ENCODE measurements at regions of chr9 and their contacts with region 1.

Region 1: DNA sequence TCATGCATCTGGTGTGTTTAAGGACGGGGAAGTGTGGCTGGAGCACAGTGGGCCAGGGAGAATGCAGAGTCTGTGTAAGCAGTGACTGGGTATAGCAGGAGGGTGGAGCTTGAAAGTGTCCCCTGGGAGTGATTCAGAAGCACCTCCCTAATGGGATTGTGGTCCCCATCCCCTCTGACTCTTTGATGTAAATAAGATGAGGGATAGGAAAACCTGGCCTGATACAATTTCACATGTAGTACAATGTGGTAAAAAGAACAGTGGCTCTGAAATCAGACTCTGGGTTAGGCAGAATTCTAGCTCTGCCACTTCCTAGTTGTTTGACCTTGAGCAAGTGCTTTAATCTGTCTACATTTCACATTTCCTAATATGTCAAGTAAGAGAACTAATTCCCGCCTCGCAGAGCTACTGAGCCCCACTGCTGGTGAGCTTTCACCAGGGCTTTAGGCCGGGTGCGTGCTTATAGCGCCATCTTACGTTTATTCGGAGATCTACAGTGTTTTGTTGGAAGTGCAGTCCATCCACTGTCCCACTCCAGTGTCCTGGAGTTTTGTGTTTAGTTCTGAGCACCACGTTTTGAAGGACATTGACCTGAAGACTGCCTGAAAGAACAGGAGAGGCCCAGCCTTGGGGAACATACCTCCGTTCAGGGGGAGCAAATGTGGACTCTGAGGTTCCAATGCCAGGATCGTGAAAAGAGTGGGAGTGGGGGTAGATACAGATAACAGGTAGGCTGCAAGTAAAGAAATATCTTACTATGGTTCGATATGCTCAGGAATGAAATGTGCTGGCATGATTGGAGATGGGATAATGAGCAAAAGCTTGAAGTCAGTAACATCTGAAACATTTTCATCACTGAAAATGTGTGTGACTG is 51.2 kb upstream of the TESK1 start:
- DNase-seq: peak; percentile 71
- H3K4me3 Mint-ChIP-seq: no peak overlapping the region
- H3K27ac Mint-ChIP-seq: no peak overlapping the region
- H3K4me1 Mint-ChIP-seq: no peaks in the 10 kb centered on the region
- H3K27me3 Mint-ChIP-seq: no peaks in the 10 kb centered on the region

Region 2: GRCh38 chr9:34989003-34989945 is 564.6 kb before region 1 on chr9 and contains the start of gene DNAJB5:
- CTCF ChIA-PET with region 1: no interaction called
- intact Hi-C with region 1: no loop called
- DNase-seq: peak; percentile 99
- H3K4me3 Mint-ChIP-seq: peak within 1 kb of the TSS; percentile 90
- H3K27ac Mint-ChIP-seq: peak within 1 kb of the TSS; percentile 92
- H3K4me1 Mint-ChIP-seq: peaks cover 85% of the 10 kb centered on the region
- H3K27me3 Mint-ChIP-seq: no peaks in the 10 kb centered on the region
- total RNA-seq, gene DNAJB5: 11.4 to 12.0 TPM

Region 3: GRCh38 chr9:35258676-35259474 is 295.0 kb before region 1 on chr9:
- CTCF ChIA-PET with region 1: interaction called, 3 read pairs
- intact Hi-C with region 1: loop called (anchors 1 kb)
- DNase-seq: peak; percentile 68
- H3K4me3 Mint-ChIP-seq: no peak overlapping the region
- H3K27ac Mint-ChIP-seq: no peak overlapping the region
- H3K4me1 Mint-ChIP-seq: no peaks in the 10 kb centered on the region
- H3K27me3 Mint-ChIP-seq: no peaks in the 10 kb centered on the region

Region 4: GRCh38 chr9:35636135-35636876 is 82.4 kb after region 1 on chr9:
- CTCF ChIA-PET with region 1: no interaction called
- intact Hi-C with region 1: no loop called
- DNase-seq: no peak
- H3K4me3 Mint-ChIP-seq: no peak overlapping the region
- H3K27ac Mint-ChIP-seq: no peak overlapping the region
- H3K4me1 Mint-ChIP-seq: peaks cover 46% of the 10 kb centered on the region
- H3K27me3 Mint-ChIP-seq: no peaks in the 10 kb centered on the region

Region 5: GRCh38 chr9:35871497-35871896 is 317.6 kb after region 1 on chr9:
- CTCF ChIA-PET with region 1: no interaction called
- intact Hi-C with region 1: no loop called
- DNase-seq: no peak
- H3K4me3 Mint-ChIP-seq: no peak overlapping the region
- H3K27ac Mint-ChIP-seq: no peak overlapping the region
- H3K4me1 Mint-ChIP-seq: no peaks in the 10 kb centered on the region
- H3K27me3 Mint-ChIP-seq: no peaks in the 10 kb centered on the region

Measured in activated naive CD4-positive, alpha-beta T cell treated with anti-CD3 and anti-CD28 coated beads for 36 hours (primary cell).